CD8-positive, alpha-beta T cell (primary cell): ENCODE measurements at regions of chr3 and their contacts with region 1.

Region 1: DNA sequence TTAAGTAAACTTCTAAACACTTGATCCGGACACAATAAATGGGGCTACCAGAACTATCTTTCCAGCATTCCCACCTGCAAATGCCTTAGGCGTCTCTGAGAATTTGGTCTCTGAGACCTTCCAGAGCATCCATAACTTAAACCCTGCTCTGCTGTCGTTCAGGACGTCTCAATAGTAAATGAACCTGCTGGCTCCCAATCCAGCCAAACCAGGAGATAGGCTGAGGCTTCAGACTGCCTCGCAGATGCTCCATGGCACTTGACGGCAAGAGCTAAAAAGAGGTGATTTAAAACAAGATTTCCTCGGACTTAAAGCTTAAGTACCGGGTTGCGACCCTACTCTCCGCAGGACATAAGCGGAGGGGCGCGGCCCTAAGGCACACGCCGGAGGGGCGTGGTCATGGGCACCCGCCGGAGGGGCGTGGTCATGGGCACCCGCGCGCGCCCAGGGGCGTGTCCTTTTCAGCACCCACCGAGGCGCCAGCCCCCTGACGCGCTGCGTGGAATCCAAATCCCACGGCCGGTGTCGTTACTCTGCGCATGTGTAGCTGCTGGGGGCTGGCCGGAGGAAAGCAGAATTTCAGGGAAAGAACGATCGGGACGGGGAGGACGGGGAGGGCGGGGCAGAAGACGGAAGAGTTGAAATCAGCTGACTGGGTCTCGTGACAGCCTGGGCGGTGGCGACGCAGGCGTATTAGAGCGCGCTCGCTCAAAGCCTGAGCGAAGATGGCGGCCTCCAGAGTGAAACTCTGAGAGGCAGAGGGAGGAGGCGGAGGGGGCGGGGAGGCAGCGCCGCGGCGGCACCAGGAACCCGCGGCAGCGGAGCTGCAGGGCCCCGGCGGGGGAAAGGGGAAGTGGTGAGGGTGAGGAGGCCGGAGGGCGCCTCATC is at the start of gene DNAJC13:
- DNase-seq: peak; percentile 84 to 97 (median 91)
- ATAC-seq: peak; percentile 91
- H3K4me3 ChIP-seq: peak within 1 kb of the TSS; percentile 61 to 99
- H3K4me3 Mint-ChIP-seq: peak within 1 kb of the TSS; percentile 98
- H3K27ac ChIP-seq: peak within 1 kb of the TSS; percentile 67 to 90
- H3K27ac Mint-ChIP-seq: peak within 1 kb of the TSS; percentile 95
- H3K4me1 ChIP-seq: peaks cover 10% of the 10 kb centered on the region
- H3K4me1 Mint-ChIP-seq: peaks cover 32% of the 10 kb centered on the region
- H3K27me3 ChIP-seq: no peaks in the 10 kb centered on the region
- H3K27me3 Mint-ChIP-seq: no peaks in the 10 kb centered on the region
- CTCF ChIP-seq: no peak
- total RNA-seq, gene DNAJC13: 8.1 to 8.5 TPM

Region 2: GRCh38 chr3:130892759-130893375 is 1524.2 kb before region 1 on chr3:
- CTCF ChIA-PET with region 1: no interaction called
- POLR2A ChIA-PET with region 1: interaction called, 5 read pairs
- intact Hi-C with region 1: loop called in 1 of 2 experiments (anchors 5 kb)
- DNase-seq: peak; percentile 21 to 89 (median 61)
- ATAC-seq: peak; percentile 63
- H3K4me3 ChIP-seq: peak overlapping the region; percentile 68 to 80
- H3K4me3 Mint-ChIP-seq: peak overlapping the region; percentile 98
- H3K27ac ChIP-seq: peak overlapping the region; percentile 86 to 87
- H3K27ac Mint-ChIP-seq: peak overlapping the region; percentile 99
- H3K4me1 ChIP-seq: peaks cover 27% of the 10 kb centered on the region
- H3K4me1 Mint-ChIP-seq: peaks cover 33% of the 10 kb centered on the region
- H3K27me3 ChIP-seq: no peaks in the 10 kb centered on the region
- H3K27me3 Mint-ChIP-seq: no peaks in the 10 kb centered on the region
- CTCF ChIP-seq: peak; percentile 87

Region 3: DNA sequence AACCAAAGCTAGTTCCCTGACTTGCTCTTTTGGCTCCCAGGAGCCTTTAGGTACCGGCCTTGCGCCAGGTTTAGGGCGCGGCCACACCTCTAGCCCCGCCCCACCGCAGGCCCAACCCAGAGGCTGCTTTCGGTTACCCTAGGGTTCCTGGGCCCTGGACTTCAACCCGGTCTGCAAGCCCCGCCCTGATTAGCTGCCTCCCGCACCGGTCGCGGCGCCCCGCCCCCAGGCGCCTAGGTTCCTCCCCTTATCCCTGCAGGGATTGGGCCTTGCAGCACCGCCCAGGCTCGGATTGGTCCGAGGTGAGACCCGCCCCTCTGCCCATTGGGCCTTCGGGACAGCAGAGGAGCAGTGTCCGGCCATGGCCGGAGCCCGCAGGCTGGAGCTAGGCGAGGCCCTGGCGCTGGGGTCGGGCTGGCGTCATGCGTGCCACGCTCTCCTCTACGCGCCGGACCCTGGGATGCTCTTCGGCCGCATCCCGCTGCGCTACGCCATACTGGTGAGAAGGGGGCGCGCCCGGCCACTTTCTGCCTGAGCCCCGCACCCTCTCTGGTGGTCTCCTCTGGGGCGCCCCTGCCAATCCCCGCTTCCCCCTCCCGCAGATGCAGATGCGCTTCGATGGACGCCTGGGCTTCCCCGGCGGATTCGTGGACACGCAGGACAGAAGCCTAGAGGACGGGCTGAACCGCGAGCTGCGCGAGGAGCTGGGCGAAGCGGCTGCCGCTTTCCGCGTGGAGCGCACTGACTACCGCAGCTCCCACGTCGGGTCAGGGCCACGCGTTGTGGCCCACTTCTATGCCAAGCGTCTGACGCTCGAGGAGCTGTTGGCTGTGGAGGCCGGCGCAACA is 1035.4 kb before region 1 on chr3 and contains the start of gene NUDT16:
- CTCF ChIA-PET with region 1: no interaction called
- POLR2A ChIA-PET with region 1: no interaction called
- intact Hi-C with region 1: loop called (anchors 2 kb)
- DNase-seq: peak; percentile 92 to 97 (median 95)
- ATAC-seq: peak; percentile 96
- H3K4me3 ChIP-seq: peak within 1 kb of the TSS; percentile 86 to 94
- H3K4me3 Mint-ChIP-seq: peak within 1 kb of the TSS; percentile 96
- H3K27ac ChIP-seq: peak within 1 kb of the TSS; percentile 45 to 64
- H3K27ac Mint-ChIP-seq: peak within 1 kb of the TSS; percentile 91
- H3K4me1 ChIP-seq: peaks cover 13% of the 10 kb centered on the region
- H3K4me1 Mint-ChIP-seq: peaks cover 31% of the 10 kb centered on the region
- H3K27me3 ChIP-seq: no peaks in the 10 kb centered on the region
- H3K27me3 Mint-ChIP-seq: no peaks in the 10 kb centered on the region
- CTCF ChIP-seq: no peak
- total RNA-seq, gene NUDT16: 3.1 to 3.5 TPM

Region 4: DNA sequence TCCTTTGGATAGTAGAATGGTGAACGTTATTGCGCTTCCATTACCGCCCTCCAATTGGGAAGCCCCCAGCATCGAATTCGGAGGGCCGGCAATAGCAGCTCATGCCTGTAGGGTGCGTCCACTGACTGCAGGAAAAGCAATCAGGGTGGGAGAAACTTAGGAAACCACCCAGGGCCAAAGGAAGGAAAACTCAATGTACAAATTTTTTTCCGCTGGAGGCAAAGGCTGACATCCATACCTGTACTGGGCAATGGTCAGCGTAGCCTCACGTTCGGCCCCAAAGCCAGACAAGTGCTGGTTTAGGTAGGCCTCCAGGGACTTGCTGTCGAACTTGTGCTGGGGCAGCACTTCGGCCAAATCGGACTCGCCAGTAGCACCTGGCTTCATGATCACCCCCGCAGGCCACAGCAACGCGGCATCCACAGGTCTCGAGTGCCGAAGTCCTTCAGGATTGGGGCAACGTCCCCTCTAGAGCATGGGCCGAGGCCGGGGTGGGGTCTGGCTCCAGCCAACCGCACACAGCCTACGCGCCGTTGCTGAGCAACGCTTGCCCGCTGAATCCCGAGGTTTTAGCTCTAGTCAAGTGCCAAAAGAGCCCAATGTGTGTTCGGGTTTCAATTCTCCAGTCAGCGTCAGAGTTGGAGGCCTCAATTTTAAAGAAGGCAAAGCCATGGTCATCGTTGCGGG is 242.5 kb after region 1 on chr3 and contains the start of gene ACAD11:
- CTCF ChIA-PET with region 1: no interaction called
- POLR2A ChIA-PET with region 1: no interaction called
- intact Hi-C with region 1: loop called (anchors 5 kb)
- DNase-seq: peak in 8 of 9 experiments; percentile 2 to 68 (median 29)
- ATAC-seq: peak; percentile 26
- H3K4me3 ChIP-seq: peak within 1 kb of the TSS; percentile 80 to 94
- H3K4me3 Mint-ChIP-seq: peak within 1 kb of the TSS; percentile 96
- H3K27ac ChIP-seq: peak within 1 kb of the TSS; percentile 83 to 89
- H3K27ac Mint-ChIP-seq: peak within 1 kb of the TSS; percentile 98
- H3K4me1 ChIP-seq: peaks cover 35% of the 10 kb centered on the region
- H3K4me1 Mint-ChIP-seq: peaks cover 69% of the 10 kb centered on the region
- H3K27me3 ChIP-seq: no peaks in the 10 kb centered on the region
- H3K27me3 Mint-ChIP-seq: no peaks in the 10 kb centered on the region
- CTCF ChIP-seq: peak; percentile 8
- total RNA-seq, gene ACAD11: 30.0 to 31.6 TPM

Region 5: DNA sequence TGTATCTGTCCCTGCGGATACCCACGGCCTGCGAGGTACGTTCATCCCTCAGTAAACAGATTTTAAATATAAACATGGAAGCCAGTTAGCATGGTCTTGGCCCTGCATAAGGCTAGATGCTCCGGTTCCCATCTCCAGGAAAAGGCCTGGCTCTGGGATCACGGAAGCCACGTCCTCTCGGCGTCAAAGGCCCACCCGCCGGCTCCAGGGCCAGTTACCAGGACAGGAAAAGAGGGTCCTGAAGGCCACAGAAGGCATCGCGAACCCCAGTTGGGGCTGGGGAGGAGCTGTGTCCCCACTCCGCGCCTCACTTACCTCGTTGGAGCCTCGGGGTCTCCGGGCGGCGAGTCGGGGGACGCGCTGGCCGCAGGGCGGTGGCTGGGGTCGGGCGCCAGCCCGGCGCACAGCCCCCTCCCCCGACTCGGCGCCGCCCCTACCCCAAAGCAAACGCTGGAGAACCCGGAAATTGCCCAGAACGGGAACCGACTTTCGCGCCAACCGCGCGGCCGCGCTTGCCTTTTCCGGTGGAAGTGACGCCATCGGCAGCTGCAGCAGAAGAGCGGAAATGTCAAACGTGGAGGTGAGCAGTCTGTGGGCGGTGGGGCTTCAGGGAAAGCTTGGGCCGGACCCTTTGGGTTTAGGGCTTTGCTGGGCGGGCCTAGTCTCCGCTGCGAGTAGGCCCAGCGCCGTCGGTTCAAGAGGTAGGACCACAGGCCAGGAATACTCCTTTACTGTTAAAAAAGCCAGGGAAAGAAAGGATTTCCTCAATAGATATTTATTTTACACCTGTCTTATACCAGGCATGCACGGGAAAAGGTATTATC is 1244.6 kb after region 1 on chr3 and contains the start of gene TOPBP1:
- CTCF ChIA-PET with region 1: no interaction called
- POLR2A ChIA-PET with region 1: no interaction called
- intact Hi-C with region 1: loop called (anchors 5 to 10 kb)
- DNase-seq: peak; percentile 58 to 92 (median 87)
- ATAC-seq: peak; percentile 82
- H3K4me3 ChIP-seq: peak within 1 kb of the TSS; percentile 86 to 90
- H3K4me3 Mint-ChIP-seq: peak within 1 kb of the TSS; percentile 98
- H3K27ac ChIP-seq: peak within 1 kb of the TSS; percentile 83 to 85
- H3K27ac Mint-ChIP-seq: peak within 1 kb of the TSS; percentile 98
- H3K4me1 ChIP-seq: peaks cover 26% of the 10 kb centered on the region
- H3K4me1 Mint-ChIP-seq: peaks cover 45% of the 10 kb centered on the region
- H3K27me3 ChIP-seq: no peaks in the 10 kb centered on the region
- H3K27me3 Mint-ChIP-seq: no peaks in the 10 kb centered on the region
- CTCF ChIP-seq: no peak
- total RNA-seq, gene TOPBP1: 32.4 to 33.9 TPM

Region 6: DNA sequence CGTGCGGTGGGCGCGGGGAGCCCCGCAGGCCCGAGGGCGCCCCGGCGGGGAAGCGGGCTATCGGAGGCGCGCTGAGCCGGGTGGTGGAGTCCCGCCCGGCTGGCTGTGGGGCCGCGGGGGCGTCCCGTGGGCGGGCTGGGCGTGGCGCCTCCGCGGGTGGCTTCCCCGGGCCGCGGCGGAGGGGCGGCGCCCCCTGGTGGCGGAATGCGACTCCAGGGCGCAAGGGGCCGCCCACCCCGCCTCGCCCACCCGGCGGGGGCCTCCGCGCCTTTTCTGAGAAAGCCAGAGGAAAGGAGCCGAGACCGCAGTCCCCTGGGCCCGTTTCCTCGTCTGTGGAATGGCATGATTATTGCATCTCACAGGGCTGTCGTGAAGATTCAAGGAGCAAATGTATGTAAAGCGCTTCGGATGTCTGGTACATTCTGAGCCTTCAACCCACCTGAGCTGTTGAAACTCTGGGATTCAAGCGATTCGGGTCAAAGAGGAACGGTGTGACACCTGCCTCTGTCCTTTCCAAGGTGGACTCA is 1510.6 kb after region 1 on chr3:
- CTCF ChIA-PET with region 1: no interaction called
- POLR2A ChIA-PET with region 1: no interaction called
- intact Hi-C with region 1: loop called in 1 of 2 experiments (anchors 5 kb)
- DNase-seq: peak; percentile 57 to 89 (median 79)
- ATAC-seq: peak; percentile 98
- H3K4me3 ChIP-seq: peak overlapping the region; percentile 43 to 67
- H3K4me3 Mint-ChIP-seq: peak overlapping the region; percentile 73
- H3K27ac ChIP-seq: no peak overlapping the region
- H3K27ac Mint-ChIP-seq: no peak overlapping the region
- H3K4me1 ChIP-seq: peaks cover 13% of the 10 kb centered on the region
- H3K4me1 Mint-ChIP-seq: peaks cover 14% of the 10 kb centered on the region
- H3K27me3 ChIP-seq: peaks cover 0 to 4% of the 10 kb centered on the region in 2 experiments
- H3K27me3 Mint-ChIP-seq: peaks cover 8% of the 10 kb centered on the region
- CTCF ChIP-seq: peak; percentile 76